Endothelial cell of umbilical vein (primary cell): ENCODE measurements at regions of chr11 and their contacts with region 1.

Region 1: GRCh38 chr11:131674051-131674755 is 303.8 kb downstream of the NTM start:
- DNase-seq: peak; percentile 62
- H3K4me3 ChIP-seq: no peak overlapping the region
- H3K27ac ChIP-seq: no peak overlapping the region
- H3K4me1 ChIP-seq: no peaks in the 10 kb centered on the region
- H3K27me3 ChIP-seq: peaks cover 0 to 4% of the 10 kb centered on the region in 2 experiments
- CTCF ChIP-seq: peak; percentile 94 to 96
- POLR2A ChIP-seq: no peak

Region 2: GRCh38 chr11:130213143-130213978 is 1460.8 kb before region 1 on chr11:
- CTCF ChIA-PET with region 1: interaction called, 12 read pairs
- POLR2A ChIA-PET with region 1: no interaction called
- dilution Hi-C with region 1: no loop called
- intact Hi-C with region 1: no loop called
- DNase-seq: peak; percentile 40
- H3K4me3 ChIP-seq: no peak overlapping the region
- H3K27ac ChIP-seq: no peak overlapping the region
- H3K4me1 ChIP-seq: no peaks in the 10 kb centered on the region
- H3K27me3 ChIP-seq: peaks cover 3 to 12% of the 10 kb centered on the region in 2 experiments
- CTCF ChIP-seq: peak; percentile 68 to 95
- POLR2A ChIP-seq: no peak

Region 3: GRCh38 chr11:130924770-130925169 is 749.4 kb before region 1 on chr11:
- CTCF ChIA-PET with region 1: interaction called, 21 read pairs
- POLR2A ChIA-PET with region 1: no interaction called
- dilution Hi-C with region 1: no loop called
- intact Hi-C with region 1: loop called (anchors 1 kb)
- DNase-seq: no peak
- H3K4me3 ChIP-seq: no peak overlapping the region
- H3K27ac ChIP-seq: no peak overlapping the region
- H3K4me1 ChIP-seq: no peaks in the 10 kb centered on the region
- H3K27me3 ChIP-seq: peaks cover 2 to 11% of the 10 kb centered on the region in 2 experiments
- CTCF ChIP-seq: no peak
- POLR2A ChIP-seq: no peak

Region 4: GRCh38 chr11:131064373-131064991 is 609.7 kb before region 1 on chr11:
- CTCF ChIA-PET with region 1: interaction called, 24 read pairs
- POLR2A ChIA-PET with region 1: no interaction called
- dilution Hi-C with region 1: loop called (anchors 25 kb)
- intact Hi-C with region 1: loop called (anchors 1 kb)
- DNase-seq: peak; percentile 23
- H3K4me3 ChIP-seq: no peak overlapping the region
- H3K27ac ChIP-seq: no peak overlapping the region
- H3K4me1 ChIP-seq: no peaks in the 10 kb centered on the region
- H3K27me3 ChIP-seq: no peaks in the 10 kb centered on the region
- CTCF ChIP-seq: peak; percentile 54 to 63
- POLR2A ChIP-seq: no peak

Region 5: GRCh38 chr11:131579932-131580387 is 94.2 kb before region 1 on chr11:
- CTCF ChIA-PET with region 1: interaction called, 3 read pairs
- POLR2A ChIA-PET with region 1: no interaction called
- dilution Hi-C with region 1: no loop called
- intact Hi-C with region 1: loop called (anchors 5 kb)
- DNase-seq: no peak
- H3K4me3 ChIP-seq: no peak overlapping the region
- H3K27ac ChIP-seq: no peak overlapping the region
- H3K4me1 ChIP-seq: no peaks in the 10 kb centered on the region
- H3K27me3 ChIP-seq: no peaks in the 10 kb centered on the region
- CTCF ChIP-seq: no peak
- POLR2A ChIP-seq: no peak

Region 6: GRCh38 chr11:131688051-131688698 is 14.0 kb after region 1 on chr11:
- CTCF ChIA-PET with region 1: interaction called, 24 read pairs
- POLR2A ChIA-PET with region 1: no interaction called
- dilution Hi-C with region 1: no loop called
- intact Hi-C with region 1: no loop called
- DNase-seq: peak; percentile 54
- H3K4me3 ChIP-seq: no peak overlapping the region
- H3K27ac ChIP-seq: no peak overlapping the region
- H3K4me1 ChIP-seq: no peaks in the 10 kb centered on the region
- H3K27me3 ChIP-seq: peaks cover 0 to 2% of the 10 kb centered on the region in 2 experiments
- CTCF ChIP-seq: peak; percentile 90 to 95
- POLR2A ChIP-seq: no peak